AG04450 (cell line): ENCODE measurements at regions of chr15 and their contacts with region 1.

Region 1: GRCh38 chr15:80989518-80990478 is at the start of gene MESD:
- DNase-seq: peak; percentile 81
- H3K4me3 ChIP-seq: peak within 1 kb of the TSS; percentile 91
- H3K27ac ChIP-seq: peak within 1 kb of the TSS; percentile 59
- H3K27me3 ChIP-seq: no peaks in the 10 kb centered on the region
- CTCF ChIP-seq: no peak
- polyA plus RNA-seq, gene MESD: 19.1 and 23.9 TPM in 2 replicates

Region 2: DNA sequence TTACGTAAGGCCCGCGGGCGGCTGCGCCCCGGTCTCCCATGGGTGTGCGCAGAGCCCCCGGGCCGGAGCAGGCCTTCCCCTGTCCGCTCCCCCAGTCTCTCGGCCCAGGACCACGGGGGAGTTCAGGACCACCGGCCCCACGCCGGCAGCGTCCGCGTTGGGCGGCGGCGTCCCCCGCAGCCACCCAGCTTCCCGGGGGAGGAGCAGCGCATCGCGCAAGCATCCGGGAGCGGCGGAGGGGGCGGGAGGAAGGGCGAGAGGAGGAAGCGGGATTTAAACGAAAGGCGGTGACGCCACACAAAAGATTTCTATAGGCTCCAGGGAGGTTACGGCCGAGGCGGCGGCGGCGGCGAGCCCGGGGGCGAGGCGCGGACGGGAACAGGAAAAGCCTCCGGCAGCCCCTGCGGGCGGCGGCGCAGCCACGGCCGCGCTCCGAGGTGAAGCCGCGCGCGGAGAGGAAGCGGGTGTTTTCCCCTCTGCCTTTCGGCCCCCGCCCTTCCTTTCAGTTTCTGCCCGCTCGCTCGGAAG is 10.9 kb after region 1 on chr15 and contains the start of gene TLNRD1:
- CTCF ChIA-PET with region 1: no interaction called
- POLR2A ChIA-PET with region 1: interaction called, 13 read pairs
- DNase-seq: peak; percentile 73
- H3K4me3 ChIP-seq: peak within 1 kb of the TSS; percentile 83
- H3K27ac ChIP-seq: peak within 1 kb of the TSS; percentile 89
- H3K27me3 ChIP-seq: no peaks in the 10 kb centered on the region
- CTCF ChIP-seq: no peak
- polyA plus RNA-seq, gene TLNRD1: 3.5 and 4.1 TPM in 2 replicates